PC-9 (cell line): ENCODE measurements at regions of chr2 and their contacts with region 1.

Region 1: GRCh38 chr2:50452056-50452455 is 579.9 kb downstream of the NRXN1 start:
- DNase-seq: no peak
- H3K4me3 ChIP-seq: no peak overlapping the region
- H3K27ac ChIP-seq: no peak overlapping the region
- H3K4me1 ChIP-seq: no peaks in the 10 kb centered on the region
- H3K27me3 ChIP-seq: no peaks in the 10 kb centered on the region
- CTCF ChIP-seq: no peak

Region 2: DNA sequence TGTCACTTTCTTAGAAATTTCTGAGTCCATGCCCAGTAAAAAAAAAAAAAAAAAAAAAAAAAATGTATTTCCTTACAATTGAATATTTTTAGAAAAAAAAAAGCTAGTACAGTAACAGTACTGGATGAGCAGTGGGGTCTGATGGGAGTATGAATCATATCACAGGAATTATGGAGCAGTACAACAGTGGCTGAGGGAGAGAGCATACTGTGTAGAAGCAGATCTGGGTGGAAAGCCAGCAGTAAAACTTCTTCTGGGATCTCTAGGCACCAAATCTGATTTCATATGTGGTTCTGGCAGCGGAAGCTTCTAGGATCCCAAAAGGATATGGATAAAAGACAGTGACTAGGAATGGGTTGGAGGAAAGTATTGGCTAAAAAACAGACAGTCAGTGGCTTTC is 882.9 kb before region 1 on chr2:
- CTCF ChIA-PET with region 1: no interaction called
- POLR2A ChIA-PET with region 1: interaction called, 11 read pairs
- intact Hi-C with region 1: no loop called
- DNase-seq: no peak
- H3K4me3 ChIP-seq: no peak overlapping the region
- H3K27ac ChIP-seq: no peak overlapping the region
- H3K4me1 ChIP-seq: no peaks in the 10 kb centered on the region
- H3K27me3 ChIP-seq: no peaks in the 10 kb centered on the region
- CTCF ChIP-seq: no peak